ENCODE measurements at regions of chr12 and their contacts with region 1.

Region 1: DNA sequence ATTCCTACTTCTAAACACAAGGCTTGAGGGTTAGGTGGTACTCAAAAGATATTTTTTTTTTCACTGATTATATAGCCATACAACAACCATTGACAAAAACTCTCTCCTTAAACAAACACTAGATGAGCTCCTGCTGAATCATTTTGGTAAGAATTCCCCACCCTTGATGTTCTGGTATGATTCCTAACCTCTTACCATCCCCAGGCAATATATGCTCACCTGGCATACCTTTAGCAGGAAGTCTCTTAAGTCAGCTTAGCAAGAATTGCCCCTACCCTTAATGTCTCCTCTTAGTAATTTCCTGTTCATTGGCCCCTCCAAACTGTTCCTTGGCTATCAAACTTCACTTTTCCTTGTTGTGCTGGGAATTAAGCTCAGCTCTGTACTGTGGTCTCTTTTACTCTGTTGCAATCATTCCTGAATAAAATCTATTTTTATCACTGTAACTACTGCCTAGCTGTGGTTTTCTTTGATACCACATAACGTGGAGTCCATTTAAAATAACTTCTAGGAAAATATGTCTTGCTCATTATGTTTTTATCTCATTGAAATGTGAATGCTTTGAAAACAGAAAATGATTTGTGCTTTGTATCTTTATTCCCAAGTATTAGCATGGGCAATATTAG is 712.6 kb downstream of the SLC16A7 start:
- DNase-seq: no peak
- H3K4me3 Mint-ChIP-seq: no peak overlapping the region
- H3K27ac Mint-ChIP-seq: no peak overlapping the region
- H3K4me1 Mint-ChIP-seq: no peaks in the 10 kb centered on the region
- H3K27me3 Mint-ChIP-seq: no peaks in the 10 kb centered on the region

Region 2: DNA sequence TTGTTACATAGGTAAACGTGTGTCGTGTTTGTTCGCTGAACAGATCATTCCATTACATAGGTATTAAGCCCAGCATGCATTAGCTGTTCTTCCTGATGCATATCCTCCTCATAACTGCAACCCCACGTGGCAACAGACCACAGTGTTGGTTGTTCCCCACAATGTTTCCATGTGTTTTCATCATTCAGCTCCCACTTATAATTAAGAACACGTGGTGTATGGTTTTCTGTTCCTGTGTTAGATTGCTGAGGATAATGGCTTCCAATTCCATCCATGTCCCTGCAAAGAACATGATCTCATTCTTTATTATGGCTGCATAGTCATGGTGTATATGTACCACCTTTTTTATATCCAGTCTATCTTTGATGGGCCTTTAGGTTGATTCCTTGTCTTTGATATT is 358.4 kb after region 1 on chr12:
- CTCF ChIA-PET with region 1: no interaction called
- POLR2A ChIA-PET with region 1: interaction called, 12 read pairs
- DNase-seq: no peak
- H3K4me3 Mint-ChIP-seq: no peak overlapping the region
- H3K27ac Mint-ChIP-seq: no peak overlapping the region
- H3K4me1 Mint-ChIP-seq: no peaks in the 10 kb centered on the region
- H3K27me3 Mint-ChIP-seq: no peaks in the 10 kb centered on the region